Dendritic cell treated with granulocyte-macrophage colony-stimulating factor and Interleukin-4, amounts not matched to agents 40 ng/mL and 50 ng/mL, for 4 days (primary cell): ENCODE measurements at regions of chr22 and their contacts with region 1.

Region 1: GRCh38 chr22:37428649-37429586 is 1.6 kb upstream of the ELFN2 start:
- H3K4me3 Mint-ChIP-seq: no peak overlapping the region
- H3K27ac Mint-ChIP-seq: no peak overlapping the region
- H3K4me1 Mint-ChIP-seq: peaks cover 36% of the 10 kb centered on the region
- H3K27me3 Mint-ChIP-seq: peaks cover 77% of the 10 kb centered on the region

Region 2: GRCh38 chr22:36998620-36999340 is 430.1 kb before region 1 on chr22:
- intact Hi-C with region 1: no loop called
- H3K4me3 Mint-ChIP-seq: no peak overlapping the region
- H3K27ac Mint-ChIP-seq: no peak overlapping the region
- H3K4me1 Mint-ChIP-seq: no peaks in the 10 kb centered on the region
- H3K27me3 Mint-ChIP-seq: peaks cover 37% of the 10 kb centered on the region

Region 3: GRCh38 chr22:37199103-37199759 is 229.7 kb before region 1 on chr22:
- intact Hi-C with region 1: no loop called
- H3K4me3 Mint-ChIP-seq: peak overlapping the region; percentile 87
- H3K27ac Mint-ChIP-seq: peak overlapping the region; percentile 88
- H3K4me1 Mint-ChIP-seq: peaks cover 31% of the 10 kb centered on the region
- H3K27me3 Mint-ChIP-seq: peaks cover 8% of the 10 kb centered on the region

Region 4: GRCh38 chr22:37316875-37317371 is 112.0 kb before region 1 on chr22:
- intact Hi-C with region 1: loop called (anchors 1 kb)
- H3K4me3 Mint-ChIP-seq: no peak overlapping the region
- H3K27ac Mint-ChIP-seq: no peak overlapping the region
- H3K4me1 Mint-ChIP-seq: peaks cover 47% of the 10 kb centered on the region
- H3K27me3 Mint-ChIP-seq: peaks cover 21% of the 10 kb centered on the region

Region 5: DNA sequence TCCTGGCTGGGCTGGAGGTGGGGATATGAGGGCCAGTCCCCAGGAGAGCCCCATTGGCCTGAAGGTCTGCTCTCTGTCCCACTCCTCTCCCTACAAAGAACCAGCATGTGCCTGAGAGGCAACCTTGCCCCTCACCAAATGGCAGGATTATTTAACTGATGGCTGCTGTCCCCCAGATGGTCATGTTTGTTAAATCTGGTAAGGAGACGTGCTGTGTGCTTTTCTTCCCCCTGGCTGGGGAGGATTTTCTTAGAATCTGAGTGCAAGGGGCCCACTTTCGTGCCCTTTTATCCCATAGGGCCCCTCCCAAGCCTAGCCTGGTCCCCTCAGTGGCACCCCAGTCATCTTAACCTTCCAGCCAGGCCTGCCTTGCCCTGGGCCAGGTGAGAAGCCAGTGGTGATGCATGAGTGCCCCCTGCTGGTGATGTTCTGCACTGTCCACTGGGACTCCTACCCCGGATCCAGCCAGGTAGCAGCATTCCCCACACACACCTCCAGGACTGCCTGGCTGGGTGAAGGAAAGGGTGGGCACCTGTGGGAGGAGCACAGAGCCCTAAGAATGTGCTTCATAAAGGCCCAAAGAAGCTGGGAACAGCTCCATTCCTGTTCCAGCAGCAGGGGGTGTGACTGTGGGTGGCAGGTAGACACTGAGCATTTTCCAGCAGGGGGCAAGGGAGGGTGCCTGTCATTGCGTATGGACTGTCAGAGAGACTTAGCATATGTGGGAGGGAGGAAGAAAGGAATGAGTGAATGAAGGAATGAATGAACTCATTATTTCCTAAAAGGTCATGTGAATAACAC is 28.4 kb after region 1 on chr22:
- intact Hi-C with region 1: no loop called
- H3K4me3 Mint-ChIP-seq: no peak overlapping the region
- H3K27ac Mint-ChIP-seq: no peak overlapping the region
- H3K4me1 Mint-ChIP-seq: peaks cover 5% of the 10 kb centered on the region
- H3K27me3 Mint-ChIP-seq: peaks cover 42% of the 10 kb centered on the region